ENCODE measurements at regions of chr12 and their contacts with region 1.

Region 1: GRCh38 chr12:121279507-121279915 is 17.0 kb downstream of the CAMKK2 start:
- DNase-seq: no peak
- H3K4me3 ChIP-seq: peak overlapping the region in 1 of 3 experiments; percentile 46
- H3K4me3 Mint-ChIP-seq: no peak overlapping the region
- H3K27ac ChIP-seq: peak overlapping the region; percentile 98 to 99
- H3K27ac Mint-ChIP-seq: peak overlapping the region; percentile 98 to 100 (median 99)
- H3K4me1 ChIP-seq: peaks cover 34 to 37% of the 10 kb centered on the region in 2 donors
- H3K4me1 Mint-ChIP-seq: peaks cover 50% of the 10 kb centered on the region
- H3K27me3 ChIP-seq: no peaks in the 10 kb centered on the region
- H3K27me3 Mint-ChIP-seq: peaks cover 0 to 3% (median 0%) of the 10 kb centered on the region in 3 donors
- CTCF ChIP-seq: no peak

Region 2: GRCh38 chr12:120886199-120887018 is 393.1 kb before region 1 on chr12:
- intact Hi-C with region 1: no loop called
- DNase-seq: no peak
- H3K4me3 ChIP-seq: no peak overlapping the region
- H3K4me3 Mint-ChIP-seq: peak overlapping the region; percentile 2 to 15
- H3K27ac ChIP-seq: peak overlapping the region in 1 of 2 donors; percentile 68
- H3K27ac Mint-ChIP-seq: peak overlapping the region in 6 of 7 donors; percentile 4 to 52 (median 48)
- H3K4me1 ChIP-seq: peaks cover 23 to 39% of the 10 kb centered on the region in 2 donors
- H3K4me1 Mint-ChIP-seq: peaks cover 53% of the 10 kb centered on the region
- H3K27me3 ChIP-seq: no peaks in the 10 kb centered on the region
- H3K27me3 Mint-ChIP-seq: peaks cover 0 to 1% (median 0%) of the 10 kb centered on the region in 3 donors
- CTCF ChIP-seq: no peak

Region 3: GRCh38 chr12:121214855-121215745 is 64.4 kb before region 1 on chr12:
- intact Hi-C with region 1: loop called in 1 of 2 experiments (anchors 2 kb)
- DNase-seq: peak; percentile 90 to 97 (median 95)
- H3K4me3 ChIP-seq: peak overlapping the region in 1 of 3 experiments; percentile 41
- H3K4me3 Mint-ChIP-seq: peak overlapping the region; percentile 57 to 62
- H3K27ac ChIP-seq: peak overlapping the region; percentile 95 to 97
- H3K27ac Mint-ChIP-seq: peak overlapping the region; percentile 98 to 100 (median 99)
- H3K4me1 ChIP-seq: peaks cover 50 to 56% of the 10 kb centered on the region in 2 donors
- H3K4me1 Mint-ChIP-seq: peaks cover 53% of the 10 kb centered on the region
- H3K27me3 ChIP-seq: no peaks in the 10 kb centered on the region
- H3K27me3 Mint-ChIP-seq: peaks cover 0 to 3% (median 0%) of the 10 kb centered on the region in 3 donors
- CTCF ChIP-seq: no peak

Region 4: GRCh38 chr12:121252712-121253345 is 26.7 kb before region 1 on chr12:
- intact Hi-C with region 1: no loop called
- DNase-seq: no peak
- H3K4me3 ChIP-seq: no peak overlapping the region
- H3K4me3 Mint-ChIP-seq: no peak overlapping the region
- H3K27ac ChIP-seq: no peak overlapping the region
- H3K27ac Mint-ChIP-seq: peak overlapping the region in 6 of 7 donors; percentile 5 to 47 (median 36)
- H3K4me1 ChIP-seq: no peaks in the 10 kb centered on the region
- H3K4me1 Mint-ChIP-seq: no peaks in the 10 kb centered on the region
- H3K27me3 ChIP-seq: no peaks in the 10 kb centered on the region
- H3K27me3 Mint-ChIP-seq: peaks cover 0 to 2% (median 0%) of the 10 kb centered on the region in 3 donors
- CTCF ChIP-seq: no peak

Region 5: GRCh38 chr12:121295746-121296617 is 16.5 kb after region 1 on chr12:
- intact Hi-C with region 1: loop called in 1 of 2 experiments (anchors 2 kb)
- DNase-seq: peak; percentile 14 to 54 (median 42)
- H3K4me3 ChIP-seq: peak overlapping the region; percentile 55 to 90 (median 77)
- H3K4me3 Mint-ChIP-seq: peak overlapping the region; percentile 94 to 95
- H3K27ac ChIP-seq: peak overlapping the region; percentile 86 to 91
- H3K27ac Mint-ChIP-seq: peak overlapping the region; percentile 89 to 97 (median 94)
- H3K4me1 ChIP-seq: peaks cover 62 to 72% of the 10 kb centered on the region in 2 donors
- H3K4me1 Mint-ChIP-seq: peaks cover 54% of the 10 kb centered on the region
- H3K27me3 ChIP-seq: no peaks in the 10 kb centered on the region
- H3K27me3 Mint-ChIP-seq: peaks cover 0 to 1% (median 0%) of the 10 kb centered on the region in 3 donors
- CTCF ChIP-seq: no peak

Region 6: DNA sequence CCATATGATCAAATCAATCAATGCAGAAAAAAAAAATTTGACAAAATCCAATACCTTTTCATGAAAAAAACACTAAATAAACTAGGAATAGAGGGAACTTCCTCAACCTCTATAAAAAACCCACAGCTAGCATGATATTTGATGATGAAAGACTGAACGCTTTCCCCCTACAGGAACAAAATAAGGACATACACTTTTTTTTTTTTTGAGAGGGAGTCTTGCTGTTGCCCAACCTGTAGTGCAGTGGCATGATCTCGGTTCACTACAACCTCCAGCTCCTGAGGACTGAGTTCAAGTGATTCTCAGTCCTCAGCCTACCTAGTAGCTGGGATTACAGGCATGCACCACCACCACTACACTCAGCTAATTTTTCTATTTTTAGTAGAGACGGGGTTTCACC is 34.9 kb after region 1 on chr12:
- intact Hi-C with region 1: loop called (anchors 5 kb)
- DNase-seq: peak; percentile 67 to 85 (median 82)
- H3K4me3 ChIP-seq: no peak overlapping the region
- H3K4me3 Mint-ChIP-seq: peak overlapping the region in 1 of 2 donors; percentile 60
- H3K27ac ChIP-seq: peak overlapping the region; percentile 39 to 76
- H3K27ac Mint-ChIP-seq: peak overlapping the region; percentile 79 to 95 (median 92)
- H3K4me1 ChIP-seq: peaks cover 12 to 22% of the 10 kb centered on the region in 2 donors
- H3K4me1 Mint-ChIP-seq: peaks cover 25% of the 10 kb centered on the region
- H3K27me3 ChIP-seq: no peaks in the 10 kb centered on the region
- H3K27me3 Mint-ChIP-seq: no peaks in the 10 kb centered on the region
- CTCF ChIP-seq: peak; percentile 27

Region 7: GRCh38 chr12:121423682-121424623 is 144.4 kb after region 1 on chr12:
- intact Hi-C with region 1: loop called in 1 of 2 experiments (anchors 10 kb)
- DNase-seq: peak in 1 of 3 donors; percentile 22
- H3K4me3 ChIP-seq: no peak overlapping the region
- H3K4me3 Mint-ChIP-seq: no peak overlapping the region
- H3K27ac ChIP-seq: peak overlapping the region; percentile 75 to 84
- H3K27ac Mint-ChIP-seq: peak overlapping the region; percentile 76 to 97 (median 95)
- H3K4me1 ChIP-seq: peaks cover 39 to 47% of the 10 kb centered on the region in 2 donors
- H3K4me1 Mint-ChIP-seq: peaks cover 48% of the 10 kb centered on the region
- H3K27me3 ChIP-seq: no peaks in the 10 kb centered on the region
- H3K27me3 Mint-ChIP-seq: no peaks in the 10 kb centered on the region
- CTCF ChIP-seq: no peak

Measured in CD14-positive monocyte (primary cell).